Endothelial cell of umbilical vein (primary cell): ENCODE measurements at regions of chr12 and their contacts with region 1.

Region 1: GRCh38 chr12:4276524-4277204 is 3.1 kb downstream of the CCND2 start:
- DNase-seq: peak; percentile 87
- H3K4me3 ChIP-seq: no peak overlapping the region
- H3K27ac ChIP-seq: no peak overlapping the region
- H3K4me1 ChIP-seq: peaks cover 10% of the 10 kb centered on the region
- H3K27me3 ChIP-seq: peaks cover 49% of the 10 kb centered on the region in 2 experiments
- CTCF ChIP-seq: peak; percentile 80 to 85
- POLR2A ChIP-seq: no peak

Region 2: DNA sequence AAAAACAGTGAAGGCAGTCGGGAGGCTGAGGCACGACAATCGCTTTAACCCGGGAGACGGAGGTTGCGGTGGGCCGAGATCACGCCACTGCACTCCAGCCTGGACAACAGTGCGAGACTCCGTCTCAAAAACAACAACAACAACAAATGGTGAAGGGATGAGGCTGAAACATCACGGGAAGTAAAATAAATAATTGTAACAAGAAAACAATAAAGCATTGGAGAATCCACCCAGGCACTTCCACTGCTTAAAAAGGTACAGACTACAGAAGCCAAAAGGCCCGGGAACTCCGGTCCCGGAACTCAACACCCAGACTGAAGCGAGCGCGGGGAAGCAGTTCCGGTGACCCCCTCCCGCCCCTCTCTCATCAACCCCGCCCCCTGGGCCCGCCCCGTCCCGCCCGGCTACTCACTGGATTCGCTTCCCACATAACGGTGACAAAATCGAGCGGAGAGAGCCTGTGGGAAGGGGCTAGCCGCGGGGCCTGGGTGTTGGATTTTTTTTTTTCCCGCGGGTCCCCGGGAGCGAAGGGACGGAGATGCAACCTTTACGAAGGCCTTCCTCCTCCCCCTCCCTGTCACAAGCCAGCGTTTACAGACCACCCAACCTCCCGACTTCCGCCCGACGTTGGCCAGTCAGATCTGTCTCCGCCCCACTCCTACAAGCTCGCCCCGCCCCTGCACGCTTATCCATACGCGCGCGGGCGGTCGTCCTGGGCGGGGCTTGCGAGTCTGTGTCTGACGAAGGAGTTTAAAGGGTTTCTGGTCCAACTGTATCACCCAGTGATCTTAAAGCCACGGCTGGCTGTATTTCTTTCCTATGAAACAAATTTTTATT is 403.6 kb before region 1 on chr12 and contains the start of gene PARP11:
- CTCF ChIA-PET with region 1: interaction called, 18 read pairs
- POLR2A ChIA-PET with region 1: no interaction called
- dilution Hi-C with region 1: no loop called
- intact Hi-C with region 1: loop called (anchors 5 kb)
- DNase-seq: peak; percentile 96
- H3K4me3 ChIP-seq: peak within 1 kb of the TSS; percentile 57 to 96 (median 86)
- H3K27ac ChIP-seq: peak within 1 kb of the TSS; percentile 64
- H3K4me1 ChIP-seq: peaks cover 13% of the 10 kb centered on the region
- H3K27me3 ChIP-seq: peaks cover 5 to 6% of the 10 kb centered on the region in 2 experiments
- CTCF ChIP-seq: no peak
- POLR2A ChIP-seq: peak; percentile 83
- total RNA-seq, gene PARP11: 4.9 and 6.3 TPM in 2 replicates

Region 3: GRCh38 chr12:3964439-3964838 is 312.2 kb before region 1 on chr12:
- CTCF ChIA-PET with region 1: interaction called, 8 read pairs
- POLR2A ChIA-PET with region 1: no interaction called
- dilution Hi-C with region 1: no loop called
- intact Hi-C with region 1: loop called (anchors 1 kb)
- DNase-seq: no peak
- H3K4me3 ChIP-seq: no peak overlapping the region
- H3K27ac ChIP-seq: no peak overlapping the region
- H3K4me1 ChIP-seq: no peaks in the 10 kb centered on the region
- H3K27me3 ChIP-seq: no peaks in the 10 kb centered on the region
- CTCF ChIP-seq: no peak
- POLR2A ChIP-seq: no peak

Region 4: GRCh38 chr12:4011597-4011996 is 265.1 kb before region 1 on chr12:
- CTCF ChIA-PET with region 1: interaction called, 16 read pairs
- POLR2A ChIA-PET with region 1: no interaction called
- dilution Hi-C with region 1: no loop called
- intact Hi-C with region 1: no loop called
- DNase-seq: no peak
- H3K4me3 ChIP-seq: no peak overlapping the region
- H3K27ac ChIP-seq: no peak overlapping the region
- H3K4me1 ChIP-seq: no peaks in the 10 kb centered on the region
- H3K27me3 ChIP-seq: no peaks in the 10 kb centered on the region
- CTCF ChIP-seq: no peak
- POLR2A ChIP-seq: no peak

Region 5: GRCh38 chr12:4107436-4107878 is 169.2 kb before region 1 on chr12:
- CTCF ChIA-PET with region 1: interaction called, 191 read pairs
- POLR2A ChIA-PET with region 1: no interaction called
- dilution Hi-C with region 1: no loop called
- intact Hi-C with region 1: loop called (anchors 1 kb)
- DNase-seq: peak; percentile 50
- H3K4me3 ChIP-seq: no peak overlapping the region
- H3K27ac ChIP-seq: no peak overlapping the region
- H3K4me1 ChIP-seq: no peaks in the 10 kb centered on the region
- H3K27me3 ChIP-seq: peaks cover 0 to 5% of the 10 kb centered on the region in 2 experiments
- CTCF ChIP-seq: peak; percentile 63 to 64
- POLR2A ChIP-seq: no peak

Region 6: DNA sequence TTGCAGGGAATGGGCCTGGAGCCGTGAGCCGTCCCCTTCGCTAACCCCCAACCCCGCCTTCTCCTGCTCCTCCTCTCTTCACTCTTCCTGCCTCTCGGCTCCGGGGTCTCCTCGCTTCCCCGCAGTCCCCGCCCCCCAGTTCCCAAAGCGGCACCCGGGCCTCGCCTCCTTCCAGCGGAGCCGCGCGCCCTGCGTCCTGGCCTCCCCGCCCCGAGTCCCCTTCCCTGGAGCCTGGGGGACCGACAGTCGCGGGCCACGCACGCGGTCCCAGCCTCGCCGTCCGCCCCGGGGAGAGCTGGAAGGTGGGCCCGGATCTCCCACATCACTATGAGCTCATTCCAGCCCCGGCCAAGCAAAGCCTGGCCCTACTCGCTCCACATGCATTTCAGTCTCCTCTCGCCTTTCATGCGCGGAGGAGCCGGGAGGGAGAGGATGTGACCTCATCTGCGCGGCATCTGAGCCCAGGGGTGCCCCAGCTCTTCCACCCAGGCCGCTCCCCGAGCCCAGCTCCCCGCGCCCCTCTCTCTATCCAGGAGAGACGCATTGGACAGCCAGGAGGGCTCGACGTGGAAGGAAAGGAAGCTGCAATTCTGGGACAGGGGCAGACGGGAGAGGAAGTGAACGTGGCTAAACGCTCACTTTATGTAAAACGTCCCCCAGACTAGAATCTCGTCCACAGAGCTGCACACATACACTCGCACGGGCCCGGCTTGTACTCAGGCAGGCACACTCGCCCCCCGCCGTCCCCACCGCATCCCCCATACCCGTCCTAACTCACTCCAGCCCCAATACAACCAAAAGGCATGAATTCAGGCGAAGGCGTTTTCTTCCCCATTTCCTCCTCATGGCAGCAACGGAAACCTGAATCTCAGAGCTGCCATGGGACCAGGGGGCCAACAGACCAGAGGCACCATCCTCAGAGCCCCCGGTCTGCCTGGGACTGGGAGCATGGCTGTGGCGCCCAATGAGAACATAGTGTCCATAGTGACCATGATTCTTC is 111.8 kb before region 1 on chr12:
- CTCF ChIA-PET with region 1: interaction called, 15 read pairs
- POLR2A ChIA-PET with region 1: no interaction called
- dilution Hi-C with region 1: no loop called
- intact Hi-C with region 1: no loop called
- DNase-seq: peak; percentile 54
- H3K4me3 ChIP-seq: peak overlapping the region in 2 of 3 experiments; percentile 19 to 38
- H3K27ac ChIP-seq: no peak overlapping the region
- H3K4me1 ChIP-seq: no peaks in the 10 kb centered on the region
- H3K27me3 ChIP-seq: no peaks in the 10 kb centered on the region
- CTCF ChIP-seq: no peak
- POLR2A ChIP-seq: no peak

Region 7: DNA sequence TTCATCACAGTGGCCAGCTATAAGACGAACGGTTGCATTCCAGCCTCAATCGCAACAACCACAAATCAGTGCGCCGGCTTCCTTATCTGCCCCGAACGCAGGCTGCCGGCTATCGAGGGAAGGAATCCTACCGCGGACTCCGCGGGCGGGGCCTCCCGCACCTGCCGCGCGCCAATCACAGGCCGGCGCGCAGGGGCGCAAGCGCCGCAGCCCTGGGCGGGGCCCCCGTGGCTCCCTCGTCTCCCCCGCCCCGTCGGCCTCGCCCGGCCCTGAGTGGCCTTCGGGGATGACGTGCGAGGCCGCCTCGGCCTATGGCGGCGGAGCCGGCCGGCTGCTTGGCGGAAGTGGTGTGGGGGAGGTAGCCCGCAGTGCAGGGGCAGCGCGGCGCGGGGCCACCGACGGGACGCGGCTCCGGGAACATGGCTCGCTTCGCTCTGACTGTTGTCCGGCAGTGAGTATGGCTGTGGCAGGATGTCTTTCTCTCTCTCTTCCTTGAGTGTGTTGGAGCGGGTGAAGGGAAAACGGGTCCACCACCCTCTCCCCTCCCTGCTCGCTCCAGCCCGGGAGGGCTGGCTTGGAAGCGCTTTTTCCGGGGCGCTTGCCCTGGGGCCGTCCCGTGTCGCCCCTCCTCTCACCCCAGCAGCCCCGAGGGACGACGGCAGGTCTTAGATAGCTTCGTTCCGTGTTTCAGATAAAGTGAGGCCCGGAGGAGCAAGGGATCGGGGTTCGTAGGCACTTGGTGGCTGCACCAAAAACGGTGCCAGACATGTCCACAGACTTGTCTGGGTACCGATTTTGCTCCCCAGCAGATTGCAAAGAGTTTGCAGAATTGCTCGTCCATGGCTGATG is 44.4 kb after region 1 on chr12 and contains the start of gene TIGAR:
- CTCF ChIA-PET with region 1: interaction called, 11 read pairs
- POLR2A ChIA-PET with region 1: no interaction called
- dilution Hi-C with region 1: no loop called
- intact Hi-C with region 1: no loop called
- DNase-seq: peak; percentile 96
- H3K4me3 ChIP-seq: peak within 1 kb of the TSS; percentile 82 to 97 (median 97)
- H3K27ac ChIP-seq: peak within 1 kb of the TSS; percentile 78
- H3K4me1 ChIP-seq: peaks cover 12% of the 10 kb centered on the region
- H3K27me3 ChIP-seq: peaks cover 0 to 2% of the 10 kb centered on the region in 2 experiments
- CTCF ChIP-seq: no peak
- POLR2A ChIP-seq: peak; percentile 94
- total RNA-seq, gene TIGAR: 31.2 and 36.3 TPM in 2 replicates

Region 8: DNA sequence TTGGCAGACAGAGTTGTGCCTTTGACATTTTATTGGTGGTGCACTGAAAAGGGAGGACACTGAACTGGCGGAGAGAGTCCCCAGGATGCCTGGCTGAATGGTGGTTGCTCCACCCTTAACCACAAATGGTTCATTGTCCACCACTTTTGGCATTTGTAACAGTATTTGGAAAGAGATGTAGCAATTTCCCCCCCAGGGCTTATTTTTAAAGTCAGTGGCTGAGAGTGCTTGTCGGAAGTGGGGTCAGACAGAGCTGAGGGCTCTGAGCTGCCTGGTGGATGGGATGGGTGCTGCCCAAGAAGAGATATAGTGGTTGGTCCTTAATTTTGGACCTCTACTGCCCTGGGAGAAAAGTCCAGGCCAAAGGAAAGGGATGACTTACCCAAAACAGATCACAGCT is 200.5 kb after region 1 on chr12:
- CTCF ChIA-PET with region 1: no interaction called
- POLR2A ChIA-PET with region 1: no interaction called
- dilution Hi-C with region 1: no loop called
- intact Hi-C with region 1: no loop called
- DNase-seq: no peak
- H3K4me3 ChIP-seq: no peak overlapping the region
- H3K27ac ChIP-seq: no peak overlapping the region
- H3K4me1 ChIP-seq: no peaks in the 10 kb centered on the region
- H3K27me3 ChIP-seq: peaks cover 2 to 6% of the 10 kb centered on the region in 2 experiments
- CTCF ChIP-seq: no peak
- POLR2A ChIP-seq: no peak